Dendritic cell treated with granulocyte-macrophage colony-stimulating factor and Interleukin-4, amounts not matched to agents 40 ng/mL and 50 ng/mL, for 4 days (primary cell): ENCODE measurements at regions of chr5 and their contacts with region 1.

Region 1: DNA sequence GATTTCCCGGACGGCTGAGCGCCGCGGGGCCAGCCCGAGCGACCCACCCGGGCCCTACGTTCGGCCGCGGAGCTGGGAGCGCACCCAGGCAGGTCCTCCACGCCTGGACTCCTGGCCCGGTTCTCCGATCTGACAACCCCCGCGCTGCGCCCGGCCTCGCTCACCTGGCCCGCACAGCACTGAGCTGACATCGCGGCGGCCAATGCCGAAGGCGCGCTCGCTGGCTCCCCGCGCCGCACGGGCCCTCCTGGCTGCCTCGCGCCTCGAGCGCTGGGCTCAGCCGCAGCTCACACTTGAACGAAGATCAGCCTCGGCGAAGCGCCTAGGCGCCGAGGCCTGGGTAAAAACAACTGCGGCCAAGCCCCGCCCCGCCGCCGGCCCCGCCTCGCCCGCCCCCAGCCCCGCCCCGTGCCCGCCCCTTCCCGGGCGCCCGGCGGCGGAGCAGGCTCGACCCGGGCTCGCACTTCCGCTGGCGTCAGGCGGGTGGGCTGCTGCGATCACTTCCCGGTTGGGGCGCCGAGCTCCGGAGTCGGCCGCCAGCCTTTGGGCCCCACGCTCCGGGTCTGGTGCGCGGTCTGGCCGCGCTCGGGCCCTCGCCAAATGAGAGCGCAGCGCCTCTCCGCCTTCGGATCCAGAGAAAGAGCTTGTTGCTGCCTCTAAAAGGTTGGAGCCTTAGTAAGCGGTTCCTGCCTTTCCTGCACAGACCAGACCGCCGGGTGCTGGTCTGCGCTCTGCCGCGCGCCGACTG is at the start of gene SERINC5:
- H3K4me3 Mint-ChIP-seq: peak within 1 kb of the TSS; percentile 100
- H3K27ac Mint-ChIP-seq: peak within 1 kb of the TSS; percentile 100
- H3K4me1 Mint-ChIP-seq: peaks cover 50% of the 10 kb centered on the region
- H3K27me3 Mint-ChIP-seq: no peaks in the 10 kb centered on the region

Region 2: GRCh38 chr5:80093796-80094195 is 162.1 kb before region 1 on chr5:
- intact Hi-C with region 1: loop called (anchors 5 kb)
- H3K4me3 Mint-ChIP-seq: no peak overlapping the region
- H3K27ac Mint-ChIP-seq: no peak overlapping the region
- H3K4me1 Mint-ChIP-seq: peaks cover 20% of the 10 kb centered on the region
- H3K27me3 Mint-ChIP-seq: no peaks in the 10 kb centered on the region

Region 3: GRCh38 chr5:80184235-80185023 is 71.5 kb before region 1 on chr5:
- intact Hi-C with region 1: loop called (anchors 5 kb)
- H3K4me3 Mint-ChIP-seq: no peak overlapping the region
- H3K27ac Mint-ChIP-seq: peak overlapping the region; percentile 75
- H3K4me1 Mint-ChIP-seq: peaks cover 80% of the 10 kb centered on the region
- H3K27me3 Mint-ChIP-seq: no peaks in the 10 kb centered on the region

Region 4: DNA sequence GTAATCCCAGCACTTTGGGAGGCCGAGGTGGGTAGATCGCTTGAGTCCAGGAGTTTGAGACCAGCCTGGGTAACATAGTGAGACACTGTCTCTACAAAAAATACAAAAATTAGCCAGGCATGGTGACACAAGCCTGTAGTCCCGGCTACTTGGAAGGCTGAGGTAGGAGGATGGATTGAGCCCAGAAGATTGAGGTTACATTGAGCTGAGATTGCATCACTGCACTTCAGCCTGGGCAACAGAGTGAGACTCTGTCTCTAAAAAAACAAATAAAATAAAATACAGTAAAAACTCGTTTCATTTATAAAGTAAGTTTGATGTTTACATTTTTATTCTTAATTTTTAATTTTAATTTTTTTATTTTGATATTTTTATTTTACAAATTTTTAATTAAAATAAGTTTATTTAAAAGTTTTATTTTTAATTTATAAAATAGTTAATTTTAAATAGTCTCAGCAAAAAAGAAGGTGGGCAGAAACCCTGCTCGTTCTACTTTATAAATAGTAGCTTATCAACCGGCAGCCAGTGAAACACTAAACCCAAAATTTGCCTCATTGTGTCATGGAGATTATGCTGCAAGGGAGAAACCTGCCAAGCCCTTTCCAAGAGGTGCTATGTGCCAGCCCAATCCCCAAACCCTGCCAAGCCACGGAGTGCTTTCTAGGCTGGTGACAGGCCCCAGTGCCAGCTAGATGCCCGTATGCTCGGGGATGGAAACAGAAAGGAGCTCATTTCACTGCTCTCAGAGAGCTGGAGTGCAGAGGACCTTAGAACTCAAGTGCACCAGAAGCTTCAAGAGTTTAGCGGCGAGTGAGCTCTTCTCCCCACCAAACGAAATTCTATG is 38.9 kb before region 1 on chr5:
- intact Hi-C with region 1: loop called (anchors 5 kb)
- H3K4me3 Mint-ChIP-seq: no peak overlapping the region
- H3K27ac Mint-ChIP-seq: peak overlapping the region; percentile 60
- H3K4me1 Mint-ChIP-seq: peaks cover 59% of the 10 kb centered on the region
- H3K27me3 Mint-ChIP-seq: no peaks in the 10 kb centered on the region

Region 5: GRCh38 chr5:80308526-80308925 is 52.6 kb after region 1 on chr5:
- intact Hi-C with region 1: no loop called
- H3K4me3 Mint-ChIP-seq: no peak overlapping the region
- H3K27ac Mint-ChIP-seq: no peak overlapping the region
- H3K4me1 Mint-ChIP-seq: no peaks in the 10 kb centered on the region
- H3K27me3 Mint-ChIP-seq: no peaks in the 10 kb centered on the region

Region 6: GRCh38 chr5:80407735-80408482 is 152.0 kb after region 1 on chr5 and contains the start of gene ZFYVE16:
- intact Hi-C with region 1: loop called (anchors 10 kb)
- H3K4me3 Mint-ChIP-seq: peak within 1 kb of the TSS; percentile 89
- H3K27ac Mint-ChIP-seq: peak within 1 kb of the TSS; percentile 99
- H3K4me1 Mint-ChIP-seq: peaks cover 46% of the 10 kb centered on the region
- H3K27me3 Mint-ChIP-seq: no peaks in the 10 kb centered on the region